Activated CD4-positive, alpha-beta T cell treated with anti-CD3 and anti-CD28 coated beads, Interleukin-2, amount 10 ng/mL, durations not matched to agents 24 days and 14 days (primary cell): ENCODE measurements at regions of chr19 and their contacts with region 1.

Region 1: DNA sequence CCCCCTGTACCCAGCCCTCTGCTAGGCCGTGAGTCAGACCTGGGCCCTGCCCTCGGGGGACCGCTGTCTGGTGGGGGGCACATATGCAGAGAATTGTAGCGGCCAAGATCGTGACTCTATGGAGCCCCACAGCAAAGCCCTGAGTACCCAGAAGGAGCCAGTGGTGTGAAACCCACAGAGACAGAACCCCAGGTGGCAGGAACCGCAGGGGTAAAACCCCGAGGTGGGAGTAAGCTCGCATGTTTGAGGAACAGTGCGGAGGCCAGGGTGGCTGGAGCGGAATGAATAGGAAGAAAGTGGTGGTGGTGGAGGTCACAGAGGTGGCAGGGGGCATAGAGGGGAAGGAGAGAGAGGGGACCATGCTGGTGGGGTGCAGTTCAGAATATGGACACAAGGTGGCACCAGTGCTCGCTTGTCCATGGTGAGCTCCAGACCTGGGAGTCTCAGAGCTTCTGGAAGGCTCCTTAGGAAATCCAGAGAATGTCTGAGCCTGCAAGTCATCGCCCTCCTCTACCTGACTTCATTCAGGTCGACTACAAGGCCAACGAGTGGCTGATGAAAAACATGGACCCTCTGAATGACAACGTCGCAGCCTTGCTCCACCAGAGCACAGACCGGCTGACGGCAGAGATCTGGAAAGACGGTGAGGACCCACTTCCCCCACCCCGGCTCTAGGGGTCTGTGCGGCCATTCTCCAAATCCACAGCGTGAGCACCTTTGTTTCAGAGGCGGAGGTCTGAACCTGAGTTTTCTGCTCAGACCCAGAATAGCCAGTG is 48.9 kb downstream of the MYH14 start:
- DNase-seq: peak; percentile 74
- H3K4me3 Mint-ChIP-seq: no peak overlapping the region
- H3K27ac Mint-ChIP-seq: no peak overlapping the region
- H3K4me1 Mint-ChIP-seq: no peaks in the 10 kb centered on the region
- H3K27me3 Mint-ChIP-seq: no peaks in the 10 kb centered on the region

Region 2: GRCh38 chr19:50214761-50215575 is 37.3 kb before region 1 on chr19:
- intact Hi-C with region 1: no loop called
- DNase-seq: no peak
- H3K4me3 Mint-ChIP-seq: no peak overlapping the region
- H3K27ac Mint-ChIP-seq: no peak overlapping the region
- H3K4me1 Mint-ChIP-seq: no peaks in the 10 kb centered on the region
- H3K27me3 Mint-ChIP-seq: no peaks in the 10 kb centered on the region

Region 3: GRCh38 chr19:50368649-50369570 is 116.6 kb after region 1 on chr19:
- intact Hi-C with region 1: no loop called
- DNase-seq: peak; percentile 94
- H3K4me3 Mint-ChIP-seq: peak overlapping the region; percentile 95
- H3K27ac Mint-ChIP-seq: peak overlapping the region; percentile 93
- H3K4me1 Mint-ChIP-seq: peaks cover 35% of the 10 kb centered on the region
- H3K27me3 Mint-ChIP-seq: no peaks in the 10 kb centered on the region

Region 4: DNA sequence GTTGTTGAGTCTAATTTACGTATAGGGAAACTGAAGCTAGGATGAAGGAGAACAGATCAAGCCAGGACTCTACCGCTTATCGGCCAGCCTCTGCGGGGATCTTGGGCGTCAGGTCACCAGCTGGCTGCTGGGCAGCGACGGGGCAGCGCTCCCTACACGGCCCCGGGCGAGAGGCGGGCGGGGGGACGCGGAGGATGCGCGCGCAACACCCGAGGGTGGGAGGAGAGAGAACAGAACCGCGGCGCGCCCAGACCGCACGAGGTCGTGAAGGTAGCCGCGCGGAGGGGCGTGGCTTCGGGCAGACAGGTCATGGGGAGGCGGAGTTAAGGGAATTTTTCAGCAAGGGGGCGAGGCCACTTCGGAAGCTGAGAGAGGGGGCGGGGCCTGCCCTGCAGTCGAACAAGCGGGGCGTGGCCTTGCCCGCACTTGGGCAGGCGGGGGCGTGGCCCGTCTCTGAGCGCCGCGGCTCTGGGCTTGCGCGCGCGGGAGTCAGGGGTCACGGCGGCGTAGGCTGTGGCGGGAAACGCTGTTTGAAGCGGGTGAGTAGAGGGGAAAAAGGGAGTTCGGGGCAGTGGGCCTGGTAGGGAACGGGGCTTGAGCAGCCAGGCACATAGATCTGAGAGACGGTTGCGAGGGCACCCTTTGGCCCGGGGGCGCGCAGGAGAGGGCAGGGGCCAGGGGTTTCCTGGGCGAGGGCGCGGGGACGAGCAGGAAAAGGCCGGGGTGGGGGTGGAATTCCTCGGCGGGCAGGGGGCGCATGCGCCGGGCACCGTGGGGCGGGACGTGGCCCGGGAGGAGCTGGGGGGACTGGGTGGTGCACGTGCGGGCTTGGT is 131.8 kb after region 1 on chr19 and contains the start of gene POLD1:
- intact Hi-C with region 1: no loop called
- DNase-seq: peak; percentile 100
- H3K4me3 Mint-ChIP-seq: peak within 1 kb of the TSS; percentile 93
- H3K27ac Mint-ChIP-seq: peak within 1 kb of the TSS; percentile 90
- H3K4me1 Mint-ChIP-seq: peaks cover 27% of the 10 kb centered on the region
- H3K27me3 Mint-ChIP-seq: no peaks in the 10 kb centered on the region
- total RNA-seq, gene POLD1: 188 and 204 TPM in 2 replicates

Region 5: DNA sequence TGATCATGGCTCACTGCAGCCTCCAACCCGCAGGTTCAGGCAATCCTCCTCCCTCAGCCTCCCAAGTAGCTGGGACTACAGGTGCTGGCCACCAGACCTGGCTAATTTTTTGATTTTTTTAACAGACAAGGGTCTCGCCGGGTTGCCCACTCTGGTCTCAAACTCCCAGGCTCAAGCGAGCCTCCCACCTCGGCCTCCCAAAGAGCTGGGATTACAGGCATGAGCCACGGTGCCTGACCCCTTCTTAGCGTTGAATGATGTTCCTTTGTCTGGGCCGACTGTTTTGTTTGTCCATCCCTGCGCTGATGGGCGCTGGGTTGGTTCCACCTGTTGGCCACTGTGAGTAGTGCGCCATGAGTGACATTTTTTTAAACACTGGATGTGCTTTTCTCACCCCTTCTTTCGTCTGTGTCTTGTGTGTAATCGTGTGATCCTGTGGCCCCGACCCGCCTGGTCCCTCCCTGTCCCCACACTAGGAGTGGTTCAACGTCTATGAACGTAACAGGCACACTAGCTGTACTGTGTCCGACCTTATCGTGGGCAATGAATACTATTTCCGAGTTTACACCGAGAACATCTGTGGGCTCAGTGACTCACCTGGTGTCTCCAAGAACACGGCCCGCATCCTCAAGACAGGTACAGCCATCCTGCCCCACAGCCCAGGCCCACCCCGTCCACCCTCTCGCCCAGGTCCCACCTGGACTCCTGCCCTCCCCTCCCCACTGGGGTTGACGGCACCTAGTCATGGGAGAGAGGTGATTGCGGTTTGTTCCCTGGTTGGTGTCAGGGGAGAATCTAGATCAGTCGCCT is 209.0 kb after region 1 on chr19:
- intact Hi-C with region 1: loop called (anchors 5 kb)
- DNase-seq: peak; percentile 90
- H3K4me3 Mint-ChIP-seq: peak overlapping the region; percentile 40
- H3K27ac Mint-ChIP-seq: no peak overlapping the region
- H3K4me1 Mint-ChIP-seq: peaks cover 12% of the 10 kb centered on the region
- H3K27me3 Mint-ChIP-seq: peaks cover 5% of the 10 kb centered on the region